ENCODE measurements at regions of chr16 and their contacts with region 1.

Region 1: GRCh38 chr16:85428168-85428898 is 184.8 kb upstream of the GSE1 start:
- DNase-seq: no peak
- H3K4me3 ChIP-seq: no peak overlapping the region
- H3K27ac ChIP-seq: no peak overlapping the region
- H3K4me1 ChIP-seq: no peaks in the 10 kb centered on the region
- H3K27me3 ChIP-seq: no peaks in the 10 kb centered on the region
- CTCF ChIP-seq: peak; percentile 59 to 63

Region 2: DNA sequence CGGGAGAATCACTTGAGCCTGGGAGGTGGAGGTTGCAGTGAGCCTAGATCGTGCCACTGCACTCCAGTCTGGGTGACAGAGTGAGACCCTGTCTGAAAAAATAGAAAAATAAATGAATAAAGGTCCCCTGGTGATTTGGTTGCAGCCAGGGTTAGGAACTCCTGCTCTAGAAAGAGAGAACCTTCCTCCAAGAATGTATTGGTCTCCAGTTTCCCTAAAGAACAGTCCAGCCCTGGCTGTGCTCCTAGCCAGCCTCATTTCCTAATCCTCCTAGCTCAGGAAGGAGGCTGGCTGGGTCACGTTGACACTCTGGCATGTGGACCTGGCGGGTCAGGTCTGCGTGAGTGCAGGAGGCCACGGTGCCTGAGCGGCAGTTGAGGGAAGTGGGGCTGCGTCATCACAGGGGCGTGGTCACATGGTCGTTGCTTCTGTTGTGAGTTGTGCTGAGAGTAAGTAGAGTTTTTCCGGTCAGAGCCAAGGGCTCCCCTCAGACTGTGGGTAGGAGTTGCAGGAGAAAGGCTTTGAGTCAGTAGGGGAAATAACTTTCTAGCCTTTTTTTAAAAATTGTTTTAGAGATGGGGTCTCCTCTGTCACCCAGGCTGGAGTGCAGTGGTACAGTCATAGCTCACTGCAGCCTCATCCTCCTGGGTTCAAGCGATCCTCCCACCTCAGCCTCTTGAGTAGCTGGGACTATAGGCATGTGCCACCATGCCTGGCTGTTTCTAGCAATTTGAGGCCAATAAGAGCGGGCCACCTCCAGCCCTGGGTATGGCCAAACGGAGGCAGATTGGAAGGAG is 122.1 kb before region 1 on chr16:
- CTCF ChIA-PET with region 1: no interaction called
- dilution Hi-C with region 1: no loop called
- in situ Hi-C with region 1: no loop called
- intact Hi-C with region 1: loop called (anchors 1 kb)
- DNase-seq: peak; percentile 61
- H3K4me3 ChIP-seq: no peak overlapping the region
- H3K27ac ChIP-seq: no peak overlapping the region
- H3K4me1 ChIP-seq: peaks cover 3% of the 10 kb centered on the region
- H3K27me3 ChIP-seq: no peaks in the 10 kb centered on the region
- CTCF ChIP-seq: no peak